Heart right ventricle (tissue), 16 donors: ENCODE measurements at regions of chr6 and their contacts with region 1.

Region 1: DNA sequence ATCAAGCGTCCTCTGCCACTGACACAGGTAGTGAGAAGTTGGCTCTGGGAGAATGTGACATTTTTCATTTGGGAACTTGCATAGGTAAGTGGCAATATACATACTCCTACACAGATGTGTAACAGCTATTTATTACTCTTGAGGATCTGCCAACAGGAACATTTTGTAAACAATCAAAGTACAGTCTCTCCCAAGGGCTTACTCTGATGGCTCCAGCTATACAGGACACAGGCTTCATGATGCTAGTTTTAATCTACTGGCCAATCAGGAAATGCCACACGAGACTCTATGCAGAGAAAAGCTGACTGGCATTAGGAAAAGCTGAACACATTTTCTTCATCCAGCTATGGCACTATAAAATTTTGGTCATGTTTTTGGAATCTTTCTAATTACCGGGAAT is 57.8 kb downstream of the POPDC3 start:
- DNase-seq: no peak
- ATAC-seq: no peak
- H3K4me3 ChIP-seq: no peak overlapping the region
- H3K27ac ChIP-seq: no peak overlapping the region
- H3K4me1 ChIP-seq: peaks cover 0 to 7% (median 0%) of the 10 kb centered on the region in 9 donors
- H3K27me3 ChIP-seq: no peaks in the 10 kb centered on the region
- CTCF ChIP-seq: no peak

Region 2: DNA sequence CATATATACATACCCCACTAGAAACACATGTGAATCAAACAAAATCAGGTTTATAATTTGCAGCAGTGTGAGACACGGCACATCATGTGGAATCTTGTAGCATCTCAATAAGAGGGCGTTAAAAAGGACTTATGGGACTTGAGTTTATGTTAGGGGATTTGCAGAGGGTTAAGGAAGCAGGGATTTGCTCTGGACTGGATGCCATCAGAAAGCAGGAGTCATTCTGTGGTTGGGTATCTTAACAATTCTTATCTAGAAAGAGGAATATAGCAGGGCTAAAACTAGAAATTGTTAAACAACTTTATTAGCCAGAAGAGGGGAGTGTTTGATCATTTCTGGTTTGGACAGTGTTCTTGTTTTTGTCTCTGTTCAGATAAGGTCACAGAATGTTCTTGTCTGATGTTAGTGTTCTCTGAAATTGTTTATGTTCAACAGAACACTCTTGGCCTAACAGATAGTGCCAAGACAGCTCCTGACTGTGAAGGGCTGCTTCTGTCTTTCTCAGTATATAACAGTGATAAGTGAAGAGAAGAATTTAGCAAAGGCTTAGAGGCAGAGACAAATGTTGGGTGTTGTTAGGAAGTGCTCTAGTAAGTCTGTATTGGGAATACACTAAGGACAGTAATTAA is 125.9 kb before region 1 on chr6:
- intact Hi-C with region 1: no loop called
- DNase-seq: no peak
- ATAC-seq: peak in 2 of 8 donors; percentile 40 to 92
- H3K4me3 ChIP-seq: no peak overlapping the region
- H3K27ac ChIP-seq: no peak overlapping the region
- H3K4me1 ChIP-seq: no peaks in the 10 kb centered on the region
- H3K27me3 ChIP-seq: no peaks in the 10 kb centered on the region
- CTCF ChIP-seq: peak in 2 of 9 donors; percentile 11 to 22

Region 3: GRCh38 chr6:105097288-105097687 is 24.7 kb before region 1 on chr6:
- intact Hi-C with region 1: loop called in 1 of 10 experiments (anchors 2 kb)
- DNase-seq: no peak
- ATAC-seq: no peak
- H3K4me3 ChIP-seq: no peak overlapping the region
- H3K27ac ChIP-seq: no peak overlapping the region
- H3K4me1 ChIP-seq: no peaks in the 10 kb centered on the region
- H3K27me3 ChIP-seq: no peaks in the 10 kb centered on the region
- CTCF ChIP-seq: no peak

Region 4: GRCh38 chr6:105179244-105180065 is 57.5 kb after region 1 on chr6 and contains the start of gene POPDC3:
- intact Hi-C with region 1: no loop called
- DNase-seq: peak; percentile 19 to 25
- ATAC-seq: peak; percentile 71 to 86 (median 80)
- H3K4me3 ChIP-seq: peak within 1 kb of the TSS; percentile 21 to 64 (median 56)
- H3K27ac ChIP-seq: peak within 1 kb of the TSS; percentile 80 to 94 (median 92)
- H3K4me1 ChIP-seq: peaks cover 0 to 9% (median 4%) of the 10 kb centered on the region in 9 donors
- H3K27me3 ChIP-seq: peaks cover 0 to 90% (median 23%) of the 10 kb centered on the region in 7 donors
- CTCF ChIP-seq: peak in 1 of 9 donors; percentile 2
- total RNA-seq, gene POPDC3: 31.1 to 59.7 (median 39.0) TPM